ENCODE measurements at regions of chr10 and their contacts with region 1.

Region 1: DNA sequence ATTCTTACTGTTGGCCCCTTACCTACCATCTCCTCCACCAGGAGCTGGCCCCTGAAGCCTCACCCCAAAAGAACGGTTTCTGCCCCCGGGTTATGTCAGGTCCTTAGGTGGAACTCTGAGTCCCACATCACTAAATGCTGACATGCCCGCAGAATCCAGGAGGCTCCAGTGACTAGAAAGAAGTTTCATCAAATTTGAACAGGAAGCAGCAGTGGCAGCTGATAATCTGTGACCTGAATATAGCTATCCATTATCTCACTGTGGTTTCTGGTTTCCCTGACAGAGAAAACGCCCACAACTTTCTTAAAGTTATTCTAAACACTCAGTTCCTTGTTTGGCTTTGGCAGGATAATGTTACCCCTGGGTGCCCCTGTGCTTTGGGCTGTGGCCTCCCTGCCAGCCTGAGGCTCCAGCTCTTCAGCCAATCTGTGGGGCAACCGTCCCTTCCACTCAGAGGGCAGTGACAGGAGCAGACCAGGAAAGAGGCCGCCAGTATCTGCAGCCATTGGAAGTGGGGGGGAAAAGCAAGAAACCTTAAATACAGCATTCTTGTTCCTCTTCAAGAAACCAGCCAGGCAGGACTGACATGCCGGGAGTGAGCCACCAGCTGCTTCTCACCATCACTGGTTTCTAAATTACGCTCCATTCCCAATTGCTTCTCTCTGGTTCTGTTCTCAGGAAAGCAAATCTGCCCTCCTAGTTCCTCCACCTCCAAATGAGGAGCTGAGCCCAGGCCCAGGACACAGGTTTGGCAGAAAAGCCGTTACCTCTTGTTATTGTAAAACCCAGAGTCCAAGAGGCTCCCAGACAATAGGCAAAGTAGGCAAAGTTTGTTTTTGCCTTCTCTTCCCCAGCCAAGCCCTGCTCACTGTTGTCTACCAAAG is 41.2 kb upstream of the VCL start:
- DNase-seq: peak; percentile 82
- ATAC-seq: peak; percentile 61
- H3K4me3 ChIP-seq: peak overlapping the region; percentile 13 to 42 (median 24)
- H3K4me3 Mint-ChIP-seq: peak overlapping the region; percentile 83
- H3K27ac ChIP-seq: peak overlapping the region; percentile 92 to 93
- H3K27ac Mint-ChIP-seq: peak overlapping the region; percentile 99
- H3K4me1 ChIP-seq: peaks cover 50 to 54% of the 10 kb centered on the region in 2 donors
- H3K4me1 Mint-ChIP-seq: peaks cover 56% of the 10 kb centered on the region
- H3K27me3 ChIP-seq: no peaks in the 10 kb centered on the region
- H3K27me3 Mint-ChIP-seq: no peaks in the 10 kb centered on the region
- CTCF ChIP-seq: no peak

Region 2: GRCh38 chr10:73743905-73744663 is 212.6 kb before region 1 on chr10 and contains the start of gene SEC24C:
- CTCF ChIA-PET with region 1: no interaction called
- POLR2A ChIA-PET with region 1: no interaction called
- intact Hi-C with region 1: no loop called
- DNase-seq: peak; percentile 99
- ATAC-seq: peak; percentile 94
- H3K4me3 ChIP-seq: peak within 1 kb of the TSS; percentile 89 to 99 (median 95)
- H3K4me3 Mint-ChIP-seq: peak within 1 kb of the TSS; percentile 100
- H3K27ac ChIP-seq: peak within 1 kb of the TSS; percentile 88 to 99
- H3K27ac Mint-ChIP-seq: peak within 1 kb of the TSS; percentile 100
- H3K4me1 ChIP-seq: peaks cover 18 to 24% of the 10 kb centered on the region in 2 donors
- H3K4me1 Mint-ChIP-seq: peaks cover 35% of the 10 kb centered on the region
- H3K27me3 ChIP-seq: no peaks in the 10 kb centered on the region
- H3K27me3 Mint-ChIP-seq: no peaks in the 10 kb centered on the region
- CTCF ChIP-seq: no peak
- total RNA-seq, gene SEC24C: 78.7 and 80.5 TPM in 2 replicates

Region 3: DNA sequence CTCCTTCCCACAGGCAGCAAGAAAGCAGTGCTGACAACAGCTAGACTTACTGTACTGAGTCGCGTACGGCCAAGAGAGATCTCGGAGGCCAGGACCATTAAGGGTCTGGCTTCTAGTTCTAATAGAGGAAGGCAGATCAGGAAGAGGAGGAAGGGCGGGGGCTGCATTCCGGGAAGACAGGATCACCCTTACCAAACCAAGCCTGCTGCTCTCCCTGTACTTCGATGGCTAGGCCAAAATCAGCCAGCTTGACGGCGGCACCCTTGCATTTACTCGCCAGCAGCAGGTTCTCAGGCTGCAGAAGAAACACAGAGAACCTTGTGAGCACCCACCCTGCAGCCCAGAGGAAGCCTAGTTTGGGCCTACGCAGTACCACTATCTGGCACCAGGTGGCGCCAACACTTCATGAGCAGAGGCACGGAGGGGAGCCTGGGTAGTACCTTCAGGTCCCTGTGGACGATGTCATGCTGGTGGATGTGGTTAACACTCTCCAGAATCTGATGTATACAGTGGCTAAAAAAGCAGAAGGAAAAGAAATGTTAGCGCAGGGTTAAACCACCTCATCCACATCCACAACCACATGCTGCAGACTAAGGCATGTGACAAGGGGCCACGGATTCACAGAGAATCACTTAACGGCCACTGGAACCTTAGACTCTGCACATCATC is 107.8 kb before region 1 on chr10:
- CTCF ChIA-PET with region 1: no interaction called
- POLR2A ChIA-PET with region 1: interaction called, 3 read pairs
- intact Hi-C with region 1: loop called (anchors 2 kb)
- DNase-seq: peak; percentile 96
- ATAC-seq: peak; percentile 100
- H3K4me3 ChIP-seq: no peak overlapping the region
- H3K4me3 Mint-ChIP-seq: peak overlapping the region; percentile 12
- H3K27ac ChIP-seq: peak overlapping the region; percentile 51 to 71
- H3K27ac Mint-ChIP-seq: peak overlapping the region; percentile 47
- H3K4me1 ChIP-seq: peaks cover 7 to 17% of the 10 kb centered on the region in 2 donors
- H3K4me1 Mint-ChIP-seq: peaks cover 13% of the 10 kb centered on the region
- H3K27me3 ChIP-seq: no peaks in the 10 kb centered on the region
- H3K27me3 Mint-ChIP-seq: no peaks in the 10 kb centered on the region
- CTCF ChIP-seq: peak; percentile 99

Region 4: GRCh38 chr10:73991884-73992245 is 35.1 kb after region 1 on chr10:
- CTCF ChIA-PET with region 1: interaction called, 12 read pairs
- POLR2A ChIA-PET with region 1: interaction called, 5 read pairs
- intact Hi-C with region 1: no loop called
- DNase-seq: peak; percentile 85
- ATAC-seq: peak; percentile 100
- H3K4me3 ChIP-seq: no peak overlapping the region
- H3K4me3 Mint-ChIP-seq: peak overlapping the region; percentile 5
- H3K27ac ChIP-seq: no peak overlapping the region
- H3K27ac Mint-ChIP-seq: peak overlapping the region; percentile 60
- H3K4me1 ChIP-seq: peaks cover 29 to 32% of the 10 kb centered on the region in 2 donors
- H3K4me1 Mint-ChIP-seq: peaks cover 34% of the 10 kb centered on the region
- H3K27me3 ChIP-seq: no peaks in the 10 kb centered on the region
- H3K27me3 Mint-ChIP-seq: no peaks in the 10 kb centered on the region
- CTCF ChIP-seq: no peak

Region 5: GRCh38 chr10:73997787-73998622 is 41.3 kb after region 1 on chr10 and contains the start of gene VCL:
- CTCF ChIA-PET with region 1: interaction called, 14 read pairs
- POLR2A ChIA-PET with region 1: interaction called, 5 read pairs
- intact Hi-C with region 1: loop called (anchors 1 kb)
- DNase-seq: peak; percentile 97
- ATAC-seq: peak; percentile 97
- H3K4me3 ChIP-seq: peak within 1 kb of the TSS; percentile 77 to 96 (median 93)
- H3K4me3 Mint-ChIP-seq: peak within 1 kb of the TSS; percentile 99
- H3K27ac ChIP-seq: peak within 1 kb of the TSS; percentile 61 to 89
- H3K27ac Mint-ChIP-seq: peak within 1 kb of the TSS; percentile 96
- H3K4me1 ChIP-seq: peaks cover 20 to 26% of the 10 kb centered on the region in 2 donors
- H3K4me1 Mint-ChIP-seq: peaks cover 45% of the 10 kb centered on the region
- H3K27me3 ChIP-seq: no peaks in the 10 kb centered on the region
- H3K27me3 Mint-ChIP-seq: no peaks in the 10 kb centered on the region
- CTCF ChIP-seq: no peak
- total RNA-seq, gene VCL: 29.8 and 37.0 TPM in 2 replicates

Region 6: GRCh38 chr10:74081192-74081803 is 124.6 kb after region 1 on chr10:
- CTCF ChIA-PET with region 1: interaction called, 16 read pairs
- POLR2A ChIA-PET with region 1: no interaction called
- intact Hi-C with region 1: loop called (anchors 5 kb)
- DNase-seq: peak; percentile 66
- ATAC-seq: peak; percentile 50
- H3K4me3 ChIP-seq: no peak overlapping the region
- H3K4me3 Mint-ChIP-seq: no peak overlapping the region
- H3K27ac ChIP-seq: no peak overlapping the region
- H3K27ac Mint-ChIP-seq: no peak overlapping the region
- H3K4me1 ChIP-seq: peaks cover 18 to 20% of the 10 kb centered on the region in 2 donors
- H3K4me1 Mint-ChIP-seq: peaks cover 37% of the 10 kb centered on the region
- H3K27me3 ChIP-seq: no peaks in the 10 kb centered on the region
- H3K27me3 Mint-ChIP-seq: no peaks in the 10 kb centered on the region
- CTCF ChIP-seq: peak; percentile 71

Region 7: GRCh38 chr10:75117995-75118394 is 1161.3 kb after region 1 on chr10:
- CTCF ChIA-PET with region 1: no interaction called
- POLR2A ChIA-PET with region 1: no interaction called
- intact Hi-C with region 1: loop called (anchors 5 kb)
- DNase-seq: no peak
- ATAC-seq: no peak
- H3K4me3 ChIP-seq: no peak overlapping the region
- H3K4me3 Mint-ChIP-seq: no peak overlapping the region
- H3K27ac ChIP-seq: no peak overlapping the region
- H3K27ac Mint-ChIP-seq: no peak overlapping the region
- H3K4me1 ChIP-seq: peaks cover 18 to 29% of the 10 kb centered on the region in 2 donors
- H3K4me1 Mint-ChIP-seq: peaks cover 54% of the 10 kb centered on the region
- H3K27me3 ChIP-seq: no peaks in the 10 kb centered on the region
- H3K27me3 Mint-ChIP-seq: no peaks in the 10 kb centered on the region
- CTCF ChIP-seq: no peak